Gastrocnemius medialis (tissue), 4 donors: ENCODE measurements at regions of chr2 and their contacts with region 1.

Region 1: DNA sequence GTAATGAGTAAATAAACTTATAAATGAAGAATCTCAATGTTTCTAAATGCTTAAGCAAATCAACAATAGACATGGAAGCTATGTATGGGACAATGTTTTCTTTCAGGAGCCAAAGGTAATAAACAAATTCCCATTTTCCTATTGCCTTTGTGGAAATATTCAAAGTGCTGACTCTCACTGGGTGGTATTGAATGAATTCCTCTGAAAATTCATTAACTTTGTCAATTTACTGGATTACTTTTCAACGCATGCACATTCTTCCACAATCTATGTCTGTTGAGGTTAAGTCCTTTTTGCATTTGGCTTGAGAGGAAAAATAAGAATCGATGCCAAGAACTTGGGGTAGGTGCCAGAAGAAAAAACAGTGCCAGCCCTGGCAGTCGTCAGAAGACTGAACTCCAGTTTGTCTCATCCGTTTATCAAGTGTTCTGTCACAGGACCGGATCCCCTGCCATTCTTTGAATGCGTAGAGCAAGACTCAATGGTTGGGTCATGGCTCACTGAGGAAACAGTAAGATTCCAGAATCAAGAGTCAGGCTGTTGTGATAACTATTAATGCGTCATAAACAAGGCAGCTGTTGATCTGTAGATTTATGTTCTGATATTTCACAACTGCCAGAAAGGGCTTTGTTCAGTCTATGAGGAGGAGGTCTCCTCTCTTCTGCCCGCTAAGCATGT is 133.3 kb downstream of the GFPT1 start:
- DNase-seq: peak; percentile 15 to 43
- ATAC-seq: peak; percentile 92 to 93
- H3K4me3 ChIP-seq: no peak overlapping the region
- H3K27ac ChIP-seq: peak overlapping the region in 2 of 4 donors; percentile 26 to 33
- H3K4me1 ChIP-seq: peaks cover 0 to 3% of the 10 kb centered on the region in 2 donors
- H3K27me3 ChIP-seq: peaks cover 0 to 3% (median 0%) of the 10 kb centered on the region in 3 donors
- CTCF ChIP-seq: no peak
- POLR2A ChIP-seq: no peak

Region 2: DNA sequence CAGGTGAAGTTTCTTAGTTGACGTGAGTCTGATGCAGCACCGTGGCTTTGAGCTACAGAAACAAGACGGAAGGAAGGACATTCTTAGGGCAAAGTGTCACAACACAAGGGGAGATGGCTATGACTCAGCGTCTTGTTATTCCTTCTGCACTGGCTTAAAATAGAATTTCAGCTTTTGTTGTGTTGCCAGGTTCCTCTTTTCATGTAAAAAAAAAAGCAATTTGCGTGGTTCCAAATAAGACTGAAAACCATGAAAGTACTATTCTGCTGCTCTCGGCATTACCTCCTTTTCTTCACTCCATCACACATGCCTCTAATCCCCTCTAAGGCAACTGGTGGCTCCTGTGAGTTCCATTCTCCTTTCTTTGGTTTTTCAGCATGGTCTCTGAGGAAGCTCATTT is 90.6 kb before region 1 on chr2:
- in situ Hi-C with region 1: no loop called
- intact Hi-C with region 1: no loop called
- DNase-seq: peak in 1 of 2 donors; percentile 22
- ATAC-seq: peak; percentile 63 to 82
- H3K4me3 ChIP-seq: no peak overlapping the region
- H3K27ac ChIP-seq: no peak overlapping the region
- H3K4me1 ChIP-seq: peaks cover 0 to 14% of the 10 kb centered on the region in 2 donors
- H3K27me3 ChIP-seq: no peaks in the 10 kb centered on the region
- CTCF ChIP-seq: no peak
- POLR2A ChIP-seq: no peak

Region 3: DNA sequence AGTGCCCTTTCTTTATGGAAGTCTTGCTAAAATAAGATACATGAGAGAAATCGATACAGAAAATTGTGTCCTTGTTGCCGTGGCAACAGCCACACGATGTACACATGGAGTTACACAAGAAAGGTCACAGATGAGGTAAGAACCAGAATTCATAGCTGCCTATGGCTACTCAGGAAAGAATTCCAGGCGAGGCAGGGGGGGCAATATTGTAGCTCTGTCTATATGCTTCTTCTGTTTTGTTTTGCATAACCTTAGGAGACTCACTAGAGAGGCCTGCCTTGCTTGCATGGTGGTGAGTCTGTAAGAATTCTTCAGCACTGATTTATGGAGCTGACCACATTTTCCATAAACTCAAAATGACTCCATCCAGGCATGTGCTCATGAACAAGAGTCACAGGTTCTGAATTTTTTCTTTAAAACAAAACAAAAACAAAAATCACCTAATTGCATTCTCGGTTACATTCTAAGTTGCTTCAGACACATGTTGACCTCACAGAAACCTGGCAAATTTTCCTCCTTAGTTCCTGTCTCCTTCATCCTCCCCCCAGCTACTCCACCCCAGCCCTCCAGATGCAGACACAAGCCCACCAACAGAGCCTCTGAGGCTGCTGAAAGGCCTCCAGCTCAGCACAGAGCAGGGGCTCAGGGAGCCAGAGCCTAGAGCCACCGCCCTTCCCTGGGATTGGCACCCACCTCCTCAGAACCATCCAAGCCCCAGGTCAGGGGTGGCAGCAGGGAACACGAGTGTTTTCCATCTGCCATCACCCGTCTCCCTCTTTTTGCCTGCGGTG is 57.2 kb before region 1 on chr2:
- in situ Hi-C with region 1: no loop called
- intact Hi-C with region 1: loop called (anchors 5 kb)
- DNase-seq: no peak
- ATAC-seq: no peak
- H3K4me3 ChIP-seq: no peak overlapping the region
- H3K27ac ChIP-seq: no peak overlapping the region
- H3K4me1 ChIP-seq: peaks cover 0 to 5% of the 10 kb centered on the region in 2 donors
- H3K27me3 ChIP-seq: no peaks in the 10 kb centered on the region
- CTCF ChIP-seq: no peak
- POLR2A ChIP-seq: no peak

Region 4: GRCh38 chr2:69694894-69695849 is 441.4 kb after region 1 on chr2:
- in situ Hi-C with region 1: no loop called
- intact Hi-C with region 1: no loop called
- DNase-seq: no peak
- ATAC-seq: peak; percentile 58 to 71
- H3K4me3 ChIP-seq: no peak overlapping the region
- H3K27ac ChIP-seq: no peak overlapping the region
- H3K4me1 ChIP-seq: peaks cover 0 to 12% of the 10 kb centered on the region in 2 donors
- H3K27me3 ChIP-seq: no peaks in the 10 kb centered on the region
- CTCF ChIP-seq: no peak
- POLR2A ChIP-seq: no peak